ENCODE measurements at regions of chr2 and their contacts with region 1.

Region 1: GRCh38 chr2:145038041-145038525 is 518.2 kb upstream of the ZEB2 start:
- DNase-seq: peak; percentile 32 to 92 (median 70)

Region 2: GRCh38 chr2:144703852-144704708 is 334.0 kb before region 1 on chr2:
- intact Hi-C with region 1: loop called (anchors 10 kb)
- DNase-seq: peak in 12 of 42 donors; percentile 5 to 50 (median 16)

Region 3: GRCh38 chr2:145123606-145124005 is 85.5 kb after region 1 on chr2:
- intact Hi-C with region 1: no loop called
- DNase-seq: peak in 11 of 42 donors; percentile 4 to 58 (median 11)